Transverse colon (tissue), 4 donors: ENCODE measurements at regions of chr19 and their contacts with region 1.

Region 1: DNA sequence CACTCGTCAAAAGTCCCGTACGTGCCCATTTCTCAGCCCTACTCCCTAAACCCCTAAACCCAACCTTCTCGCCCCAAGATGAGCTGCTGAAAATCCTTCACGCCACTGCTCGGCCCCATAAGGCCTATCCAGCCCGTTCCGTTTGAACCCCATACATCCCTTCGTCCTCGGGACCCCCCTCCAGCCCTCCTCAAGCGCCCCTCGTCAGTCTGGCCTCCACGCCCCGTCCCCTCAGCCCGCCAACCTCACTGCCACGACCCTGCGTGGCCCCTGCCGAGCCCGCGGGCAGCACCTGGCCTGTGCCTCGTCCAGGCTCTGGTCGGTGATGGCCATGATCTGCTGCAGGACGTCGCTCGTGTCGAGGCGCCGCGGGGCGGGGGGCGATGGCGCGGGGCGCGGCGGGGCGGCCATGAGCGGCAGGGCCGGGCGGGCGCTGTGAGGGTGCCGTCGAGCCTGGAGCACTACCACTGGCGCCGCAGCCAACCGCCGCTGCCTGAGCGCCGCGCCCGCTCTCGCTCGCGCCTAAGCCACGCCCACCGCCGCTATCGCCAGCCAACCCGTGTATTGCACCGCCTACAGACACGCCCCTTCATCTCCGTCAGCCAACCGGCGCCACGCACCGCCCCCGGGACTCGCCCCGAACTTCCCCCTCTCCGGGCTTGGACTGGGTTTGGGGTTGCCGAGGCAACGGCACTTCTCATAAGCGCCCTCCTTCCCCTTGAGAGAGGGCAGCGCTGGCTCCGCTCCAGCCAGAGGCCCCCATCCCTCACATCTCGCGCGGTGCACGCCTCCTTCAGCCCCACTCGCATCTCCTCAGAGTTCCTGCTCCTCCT is at the start of gene PBX4:
- DNase-seq: peak; percentile 97
- H3K4me3 ChIP-seq: peak within 1 kb of the TSS; percentile 0 to 45 (median 38)
- H3K27ac ChIP-seq: peak within 1 kb of the TSS in 3 of 4 donors; percentile 54 to 66 (median 57)
- H3K4me1 ChIP-seq: peaks cover 0 to 11% (median 7%) of the 10 kb centered on the region in 4 donors
- H3K27me3 ChIP-seq: no peaks in the 10 kb centered on the region
- CTCF ChIP-seq: no peak
- EP300 ChIP-seq: no peak
- POLR2A ChIP-seq: peak; percentile 30
- total RNA-seq, gene PBX4: 1.9 to 11.9 (median 5.1) TPM

Region 2: GRCh38 chr19:18802354-18802753 is 816.1 kb before region 1 on chr19:
- in situ Hi-C with region 1: no loop called
- intact Hi-C with region 1: loop called (anchors 5 kb)
- DNase-seq: no peak
- H3K4me3 ChIP-seq: no peak overlapping the region
- H3K27ac ChIP-seq: no peak overlapping the region
- H3K4me1 ChIP-seq: peaks cover 0 to 4% (median 2%) of the 10 kb centered on the region in 4 donors
- H3K27me3 ChIP-seq: peaks cover 26% of the 10 kb centered on the region
- CTCF ChIP-seq: no peak
- EP300 ChIP-seq: no peak
- POLR2A ChIP-seq: no peak